H1 (cell line): ENCODE measurements at regions of chr20 and their contacts with region 1.

Region 1: DNA sequence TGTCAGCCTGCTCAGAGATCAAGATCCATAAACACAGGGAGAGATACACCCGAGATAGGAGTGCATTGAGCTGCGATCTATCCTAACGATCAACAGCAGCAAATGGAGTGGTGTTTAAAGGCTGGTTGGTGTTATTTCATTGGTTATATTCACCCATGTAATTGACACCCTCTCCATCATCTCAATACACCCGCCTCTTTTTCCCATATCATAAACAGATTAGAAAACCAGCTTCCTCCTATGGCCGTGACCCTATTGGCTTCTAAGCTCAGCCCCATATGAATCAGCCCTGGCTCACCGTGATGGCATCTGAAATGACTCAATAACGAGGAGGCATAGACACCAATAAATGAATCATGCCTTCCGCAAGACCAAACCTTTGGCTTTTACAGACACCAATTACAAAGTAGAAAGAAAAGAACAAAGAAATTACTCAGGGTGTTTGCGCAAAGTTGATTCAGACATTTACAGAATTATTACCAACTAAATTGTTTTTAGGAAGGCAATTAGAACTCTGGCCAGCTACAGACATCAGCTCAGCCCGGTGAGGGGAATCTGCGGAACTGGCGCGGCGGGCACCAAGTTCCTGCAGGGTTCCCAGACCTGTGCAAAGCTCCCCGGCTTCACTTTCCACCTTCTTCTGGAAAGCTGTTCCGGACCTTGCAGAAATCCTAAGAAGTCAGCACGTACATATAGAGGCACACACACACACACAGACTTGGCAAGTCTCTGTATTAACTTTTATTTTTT is 11.5 kb downstream of the PMEPA1 start:
- DNase-seq: no peak
- H3K4me3 ChIP-seq: no peak overlapping the region
- H3K27ac ChIP-seq: no peak overlapping the region
- H3K4me1 ChIP-seq: peaks cover 0 to 10% (median 6%) of the 10 kb centered on the region in 4 experiments; a peak in 5 of 7 replicates
- H3K27me3 ChIP-seq: no peaks in the 10 kb centered on the region
- CTCF ChIP-seq: no peak
- EP300 ChIP-seq: no peak
- POLR2A ChIP-seq: no peak
- RAD21 ChIP-seq: no peak

Region 2: DNA sequence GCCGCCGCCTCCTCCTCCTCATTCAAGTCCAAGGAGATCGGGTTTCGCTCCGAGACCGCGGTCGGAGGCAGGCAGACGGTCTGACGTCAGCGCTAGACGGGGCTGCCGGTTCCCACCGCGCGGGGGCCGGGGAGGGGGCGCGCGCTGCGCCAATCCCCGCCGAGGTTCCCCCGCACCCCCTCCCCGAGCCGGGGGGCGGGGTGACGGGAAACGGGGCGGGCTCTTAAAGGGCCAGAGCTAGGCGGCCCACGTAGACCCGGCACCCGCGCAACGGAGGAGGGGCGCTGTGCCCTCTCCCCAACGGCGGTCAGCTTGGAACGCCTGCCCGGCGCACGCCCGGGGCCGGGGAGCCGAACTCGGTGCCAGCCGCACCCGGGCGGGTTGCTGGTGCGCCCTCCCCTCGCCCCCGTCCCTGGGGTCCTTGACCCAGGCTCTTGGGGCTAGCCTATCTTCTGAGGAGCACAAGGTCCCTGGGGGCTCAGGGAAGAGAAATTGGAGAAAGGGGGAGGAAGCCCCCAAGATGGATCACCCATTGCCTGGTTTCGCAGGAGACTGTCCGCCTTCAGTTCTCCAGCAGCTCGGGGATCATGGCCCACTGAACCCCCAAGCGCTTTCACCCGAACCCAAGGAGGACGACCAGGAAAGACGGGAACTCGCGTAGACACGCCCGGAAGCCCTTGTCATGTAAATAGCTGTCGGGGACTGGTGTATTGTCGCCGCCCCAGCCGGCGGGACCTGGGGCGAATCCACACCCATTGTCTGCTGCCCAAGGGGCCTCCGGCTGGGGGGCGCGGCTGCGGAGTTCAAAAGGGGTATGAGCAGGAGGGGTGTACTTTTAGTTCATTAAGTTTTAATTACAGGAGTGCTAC is 11.9 kb after region 1 on chr20 and contains the start of gene PMEPA1:
- CTCF ChIA-PET with region 1: interaction called, 8 read pairs
- POLR2A ChIA-PET with region 1: interaction called, 59 read pairs
- DNase-seq: peak; percentile 84 to 94
- H3K4me3 ChIP-seq: peak within 1 kb of the TSS; percentile 80 to 83 (median 82)
- H3K27ac ChIP-seq: peak within 1 kb of the TSS; percentile 61
- H3K4me1 ChIP-seq: peaks cover 0 to 24% (median 13%) of the 10 kb centered on the region in 4 experiments; a peak in 5 of 7 replicates
- H3K27me3 ChIP-seq: peaks cover 0 to 18% (median 10%) of the 10 kb centered on the region in 4 experiments; a peak in 5 of 7 replicates
- CTCF ChIP-seq: no peak
- EP300 ChIP-seq: peak in 1 of 2 experiments; percentile 95; a peak in 2 of 3 replicates
- POLR2A ChIP-seq: peak in 1 of 2 experiments; percentile 50; a peak in 1 of 3 replicates
- RAD21 ChIP-seq: no peak
- total RNA-seq, gene PMEPA1: 20.0 and 20.5 TPM in 2 replicates